ENCODE measurements at regions of chr22 and their contacts with region 1.

Region 1: GRCh38 chr22:20568989-20569769 is 61.8 kb downstream of the MED15 start:
- DNase-seq: peak; percentile 74 to 95
- ATAC-seq: peak; percentile 55 to 77 (median 76)
- H3K4me3 ChIP-seq: no peak overlapping the region
- H3K4me3 Mint-ChIP-seq: peak overlapping the region; percentile 89
- H3K27ac ChIP-seq: peak overlapping the region; percentile 78
- H3K27ac Mint-ChIP-seq: peak overlapping the region; percentile 94 to 95
- H3K4me1 ChIP-seq: peaks cover 92% of the 10 kb centered on the region
- H3K4me1 Mint-ChIP-seq: peaks cover 76 to 88% of the 10 kb centered on the region in 2 donors
- H3K27me3 ChIP-seq: no peaks in the 10 kb centered on the region
- H3K27me3 Mint-ChIP-seq: no peaks in the 10 kb centered on the region
- CTCF ChIP-seq: no peak

Region 2: DNA sequence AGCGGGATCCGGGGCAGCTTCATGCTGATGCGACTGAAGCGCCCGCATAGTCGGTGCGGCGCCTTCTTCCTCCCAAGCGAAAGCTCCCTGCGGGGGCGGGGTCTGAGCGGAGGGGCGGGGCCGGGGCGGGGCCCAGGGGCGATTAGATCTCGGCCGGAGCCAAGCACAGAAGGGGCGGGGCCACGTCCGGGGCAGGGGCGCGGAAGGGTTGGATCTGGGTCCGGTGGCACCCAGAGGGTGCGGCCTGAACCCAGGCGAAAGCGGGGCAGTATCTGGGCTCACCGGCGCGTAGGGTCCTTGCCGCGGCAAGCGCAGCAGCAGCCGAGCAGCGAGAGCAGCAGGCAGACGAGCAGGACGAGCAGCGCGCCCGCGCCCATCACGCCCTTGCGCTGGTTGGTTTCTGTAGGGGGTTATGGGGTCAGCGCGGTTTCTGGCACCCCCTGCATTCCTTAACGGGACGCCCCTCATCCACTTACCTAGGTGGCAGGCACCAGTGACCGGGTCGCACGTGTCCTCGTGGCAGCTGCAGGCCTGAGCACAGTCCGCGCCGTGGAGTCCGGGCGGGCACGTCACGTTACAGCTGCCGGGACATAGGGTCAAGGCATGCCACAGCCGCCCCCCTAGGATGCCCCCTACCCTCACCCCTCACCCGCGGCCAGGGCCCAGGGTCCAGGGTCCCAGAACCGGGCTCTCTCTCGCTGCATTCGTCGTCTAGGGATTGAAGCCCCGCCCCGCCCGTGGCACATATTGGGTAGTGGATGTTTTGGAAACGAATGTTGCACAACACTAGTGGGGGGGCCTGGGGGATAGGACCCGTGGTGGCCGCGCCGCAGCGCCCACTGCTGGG is 139.7 kb before region 1 on chr22:
- intact Hi-C with region 1: loop called (anchors 10 kb)
- DNase-seq: peak; percentile 70 to 87
- ATAC-seq: peak; percentile 73 to 83 (median 78)
- H3K4me3 ChIP-seq: peak overlapping the region; percentile 61
- H3K4me3 Mint-ChIP-seq: peak overlapping the region; percentile 90
- H3K27ac ChIP-seq: no peak overlapping the region
- H3K27ac Mint-ChIP-seq: peak overlapping the region in 1 of 2 donors; percentile 80
- H3K4me1 ChIP-seq: peaks cover 33% of the 10 kb centered on the region
- H3K4me1 Mint-ChIP-seq: peaks cover 5 to 30% of the 10 kb centered on the region in 2 donors
- H3K27me3 ChIP-seq: peaks cover 40% of the 10 kb centered on the region
- H3K27me3 Mint-ChIP-seq: peaks cover 20 to 27% of the 10 kb centered on the region in 2 donors
- CTCF ChIP-seq: no peak

Region 3: GRCh38 chr22:20507253-20508066 is 61.7 kb before region 1 on chr22 and contains the start of gene MED15:
- intact Hi-C with region 1: loop called (anchors 2 kb)
- DNase-seq: peak; percentile 80 to 93
- ATAC-seq: peak; percentile 77 to 92 (median 90)
- H3K4me3 ChIP-seq: peak within 1 kb of the TSS; percentile 90
- H3K4me3 Mint-ChIP-seq: peak within 1 kb of the TSS; percentile 98
- H3K27ac ChIP-seq: peak within 1 kb of the TSS; percentile 91
- H3K27ac Mint-ChIP-seq: peak within 1 kb of the TSS; percentile 95 to 98
- H3K4me1 ChIP-seq: peaks cover 42% of the 10 kb centered on the region
- H3K4me1 Mint-ChIP-seq: peaks cover 52 to 54% of the 10 kb centered on the region in 2 donors
- H3K27me3 ChIP-seq: no peaks in the 10 kb centered on the region
- H3K27me3 Mint-ChIP-seq: no peaks in the 10 kb centered on the region
- CTCF ChIP-seq: no peak
- total RNA-seq, gene MED15: 269 to 291 (median 270) TPM

Region 4: DNA sequence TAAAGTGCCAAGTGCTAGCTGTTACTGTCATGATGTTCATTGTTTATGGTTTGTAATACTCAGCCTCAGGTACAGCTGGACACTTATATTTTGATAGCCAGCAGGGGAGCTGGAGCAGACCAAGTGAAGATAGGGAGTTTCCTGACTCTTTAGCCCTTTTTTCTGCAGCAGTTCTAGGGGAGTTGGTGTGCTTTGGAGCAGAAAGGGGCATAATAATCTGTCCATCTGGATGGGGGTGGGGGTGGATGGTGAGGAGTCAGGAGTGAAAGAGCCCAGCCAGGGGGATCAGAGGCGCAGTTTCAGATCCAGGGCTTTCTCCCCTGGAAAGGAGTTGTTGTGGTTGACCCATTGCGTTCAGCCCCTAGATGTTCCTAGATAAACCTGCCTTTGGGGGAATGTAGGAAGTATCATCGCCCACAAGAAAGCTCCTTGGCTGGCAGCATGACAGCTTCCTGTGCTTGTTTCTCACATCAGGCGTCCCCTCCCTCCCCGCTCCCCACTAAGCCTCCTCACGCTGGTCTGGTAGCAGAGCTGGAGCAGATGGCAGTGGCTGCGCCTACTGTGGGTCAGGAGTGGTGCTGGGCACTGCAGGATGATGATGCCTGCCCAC is 19.8 kb before region 1 on chr22:
- intact Hi-C with region 1: loop called (anchors 2 kb)
- DNase-seq: peak in 1 of 2 donors; percentile 88
- ATAC-seq: peak; percentile 76 to 83 (median 77)
- H3K4me3 ChIP-seq: no peak overlapping the region
- H3K4me3 Mint-ChIP-seq: peak overlapping the region; percentile 79
- H3K27ac ChIP-seq: peak overlapping the region; percentile 69
- H3K27ac Mint-ChIP-seq: peak overlapping the region; percentile 94 to 95
- H3K4me1 ChIP-seq: peaks cover 81% of the 10 kb centered on the region
- H3K4me1 Mint-ChIP-seq: peaks cover 63 to 67% of the 10 kb centered on the region in 2 donors
- H3K27me3 ChIP-seq: no peaks in the 10 kb centered on the region
- H3K27me3 Mint-ChIP-seq: no peaks in the 10 kb centered on the region
- CTCF ChIP-seq: no peak

Region 5: GRCh38 chr22:20558567-20559205 is 10.5 kb before region 1 on chr22:
- intact Hi-C with region 1: loop called (anchors 1 kb)
- DNase-seq: no peak
- ATAC-seq: no peak
- H3K4me3 ChIP-seq: no peak overlapping the region
- H3K4me3 Mint-ChIP-seq: peak overlapping the region; percentile 80
- H3K27ac ChIP-seq: peak overlapping the region; percentile 80
- H3K27ac Mint-ChIP-seq: peak overlapping the region; percentile 91 to 93
- H3K4me1 ChIP-seq: peaks cover 64% of the 10 kb centered on the region
- H3K4me1 Mint-ChIP-seq: peaks cover 56 to 64% of the 10 kb centered on the region in 2 donors
- H3K27me3 ChIP-seq: no peaks in the 10 kb centered on the region
- H3K27me3 Mint-ChIP-seq: no peaks in the 10 kb centered on the region
- CTCF ChIP-seq: no peak

Region 6: DNA sequence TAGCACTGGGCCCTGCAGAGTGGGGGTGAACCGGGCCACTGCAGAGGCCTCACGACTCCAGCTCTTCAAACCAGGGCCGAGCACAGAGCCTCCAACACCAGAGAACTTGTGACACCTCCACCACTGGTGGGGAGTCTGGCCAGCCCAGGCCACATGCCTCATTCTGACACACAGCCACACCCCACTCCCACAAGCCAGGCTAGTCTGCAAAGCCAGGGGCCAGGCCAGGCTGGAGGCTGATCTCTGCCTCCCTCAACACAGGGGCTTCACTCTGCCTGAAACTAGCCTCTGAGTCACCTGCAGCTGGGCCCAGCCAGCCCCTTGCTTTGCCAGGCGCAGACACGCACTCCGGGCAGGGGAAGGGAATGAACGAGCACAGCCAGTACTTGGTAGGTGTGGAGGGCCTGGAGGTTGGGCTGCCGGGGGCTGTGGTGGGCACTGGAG is 41.1 kb after region 1 on chr22:
- intact Hi-C with region 1: no loop called
- DNase-seq: peak in 1 of 2 donors; percentile 27
- ATAC-seq: peak; percentile 48 to 71 (median 59)
- H3K4me3 ChIP-seq: peak overlapping the region; percentile 15
- H3K4me3 Mint-ChIP-seq: peak overlapping the region; percentile 79
- H3K27ac ChIP-seq: peak overlapping the region; percentile 61
- H3K27ac Mint-ChIP-seq: peak overlapping the region; percentile 81 to 92
- H3K4me1 ChIP-seq: peaks cover 70% of the 10 kb centered on the region
- H3K4me1 Mint-ChIP-seq: peaks cover 43 to 66% of the 10 kb centered on the region in 2 donors
- H3K27me3 ChIP-seq: no peaks in the 10 kb centered on the region
- H3K27me3 Mint-ChIP-seq: no peaks in the 10 kb centered on the region
- CTCF ChIP-seq: no peak

Region 7: DNA sequence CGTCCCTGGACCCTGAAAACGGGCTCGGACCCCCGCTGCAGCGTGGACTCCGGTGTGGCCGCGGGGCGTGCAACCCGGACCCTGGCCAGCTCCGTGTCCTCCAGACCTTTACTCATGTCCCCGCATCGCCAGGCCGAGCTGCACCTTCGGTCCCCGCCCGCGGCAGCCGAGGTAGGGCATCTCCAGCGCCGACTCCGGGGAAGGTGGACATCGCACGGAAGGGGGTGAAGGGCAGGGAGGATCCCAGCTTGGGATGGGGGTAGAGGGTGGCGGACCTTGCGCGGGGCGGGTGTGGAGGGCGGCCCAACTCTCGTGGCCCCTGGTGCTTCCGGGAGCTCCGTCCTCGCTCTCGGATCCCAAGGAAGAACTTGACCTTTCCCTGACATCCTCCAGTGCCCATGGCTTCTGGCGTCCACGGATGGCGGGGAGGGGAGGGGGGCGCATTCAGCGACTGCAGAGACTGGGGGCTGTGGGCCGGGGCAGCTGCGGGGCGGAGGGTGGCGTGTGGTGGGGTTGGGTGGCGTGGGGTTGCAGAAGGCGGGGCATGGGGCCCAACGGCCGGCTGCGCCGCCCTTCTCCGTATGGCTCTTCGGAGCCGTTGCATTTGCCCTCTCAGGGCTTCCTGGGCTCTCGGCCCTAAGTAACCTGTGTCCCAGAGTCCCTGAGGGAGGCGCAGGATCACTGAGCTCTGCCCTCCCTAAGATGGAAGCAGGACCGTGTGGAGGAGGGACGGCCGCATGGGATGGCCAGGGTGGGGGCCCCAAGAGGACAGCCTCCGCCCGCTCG is 388.3 kb after region 1 on chr22:
- intact Hi-C with region 1: no loop called
- DNase-seq: no peak
- ATAC-seq: peak; percentile 26 to 73 (median 69)
- H3K4me3 ChIP-seq: peak overlapping the region; percentile 65
- H3K4me3 Mint-ChIP-seq: peak overlapping the region; percentile 89
- H3K27ac ChIP-seq: no peak overlapping the region
- H3K27ac Mint-ChIP-seq: peak overlapping the region in 1 of 2 donors; percentile 82
- H3K4me1 ChIP-seq: peaks cover 22% of the 10 kb centered on the region
- H3K4me1 Mint-ChIP-seq: peaks cover 8 to 22% of the 10 kb centered on the region in 2 donors
- H3K27me3 ChIP-seq: no peaks in the 10 kb centered on the region
- H3K27me3 Mint-ChIP-seq: no peaks in the 10 kb centered on the region
- CTCF ChIP-seq: no peak